CD4-positive, alpha-beta T cell (primary cell): ENCODE measurements at regions of chr21 and their contacts with region 1.

Region 1: DNA sequence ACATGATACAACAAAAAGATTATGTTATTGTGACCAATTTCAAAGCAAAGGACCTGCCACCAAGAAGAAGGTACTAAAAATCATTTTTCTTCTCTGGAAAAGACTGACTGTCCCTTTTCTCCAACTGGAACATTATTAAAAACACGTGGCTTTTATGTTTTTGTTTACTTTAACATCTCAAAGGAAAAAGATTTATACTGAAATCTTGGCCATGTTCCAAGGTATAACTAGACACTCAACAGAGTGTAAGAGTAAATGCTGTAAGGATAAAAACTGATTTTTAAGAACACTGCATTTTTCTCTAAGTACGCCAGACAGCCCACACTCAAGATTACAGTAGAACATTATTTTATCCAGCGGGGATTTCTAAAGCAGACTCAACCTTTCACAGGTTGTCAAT is 62.1 kb downstream of the BRWD1 start:
- DNase-seq: no peak
- ATAC-seq: no peak
- H3K4me3 ChIP-seq: no peak overlapping the region
- H3K4me3 Mint-ChIP-seq: no peak overlapping the region
- H3K27ac ChIP-seq: no peak overlapping the region
- H3K27ac Mint-ChIP-seq: no peak overlapping the region
- H3K4me1 ChIP-seq: no peaks in the 10 kb centered on the region
- H3K4me1 Mint-ChIP-seq: peaks cover 14% of the 10 kb centered on the region
- H3K27me3 ChIP-seq: no peaks in the 10 kb centered on the region
- H3K27me3 Mint-ChIP-seq: no peaks in the 10 kb centered on the region
- CTCF ChIP-seq: no peak

Region 2: DNA sequence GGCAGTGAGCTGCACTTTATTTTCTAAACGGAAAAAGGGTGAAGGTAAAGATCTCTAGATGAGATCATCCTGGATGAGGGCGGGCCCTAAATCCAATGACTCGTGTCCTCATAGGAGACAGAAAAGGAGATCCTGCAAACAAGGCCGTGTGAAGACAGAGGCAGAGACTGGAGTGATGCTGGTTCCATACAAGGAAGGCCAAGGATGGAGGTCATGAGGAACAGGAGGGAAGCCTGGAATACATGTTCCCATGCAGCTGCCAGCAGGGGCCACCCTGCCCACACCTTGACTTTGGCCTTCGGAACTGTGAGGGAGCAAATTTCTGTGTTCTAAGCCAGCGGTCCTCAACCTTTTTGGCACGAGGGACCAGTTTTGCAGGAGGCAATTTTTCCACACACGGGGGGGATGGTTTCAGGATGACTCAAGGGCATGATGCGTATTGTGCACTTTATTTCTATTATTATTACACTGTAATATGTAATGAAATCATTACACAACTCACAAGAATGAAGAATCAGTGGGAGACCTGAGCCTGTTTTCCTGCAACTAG is 162.4 kb before region 1 on chr21:
- CTCF ChIA-PET with region 1: no interaction called
- POLR2A ChIA-PET with region 1: no interaction called
- intact Hi-C with region 1: no loop called
- DNase-seq: no peak
- ATAC-seq: no peak
- H3K4me3 ChIP-seq: no peak overlapping the region
- H3K4me3 Mint-ChIP-seq: no peak overlapping the region
- H3K27ac ChIP-seq: no peak overlapping the region
- H3K27ac Mint-ChIP-seq: no peak overlapping the region
- H3K4me1 ChIP-seq: no peaks in the 10 kb centered on the region
- H3K4me1 Mint-ChIP-seq: no peaks in the 10 kb centered on the region
- H3K27me3 ChIP-seq: no peaks in the 10 kb centered on the region
- H3K27me3 Mint-ChIP-seq: no peaks in the 10 kb centered on the region
- CTCF ChIP-seq: no peak

Region 3: DNA sequence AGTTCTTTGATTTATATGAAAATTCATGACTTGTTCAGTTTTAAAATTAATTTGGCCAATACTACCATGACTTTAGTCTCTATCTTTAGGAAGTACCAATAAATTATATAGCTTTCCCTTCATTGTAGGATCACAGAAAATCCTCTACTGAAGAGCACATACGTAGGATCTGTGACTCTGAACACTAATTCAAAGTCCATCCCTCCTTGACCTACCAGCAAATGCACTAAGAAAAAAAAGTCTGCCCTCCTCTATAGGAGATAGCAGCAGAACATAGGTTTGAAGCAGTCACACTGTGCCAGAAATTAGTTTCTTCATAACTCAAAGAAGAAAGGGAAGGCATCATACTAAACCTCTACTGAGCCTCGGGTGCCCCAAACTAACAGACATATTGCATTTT is 45.6 kb after region 1 on chr21:
- CTCF ChIA-PET with region 1: no interaction called
- POLR2A ChIA-PET with region 1: no interaction called
- intact Hi-C with region 1: loop called in 1 of 2 experiments (anchors 10 kb)
- DNase-seq: no peak
- ATAC-seq: no peak
- H3K4me3 ChIP-seq: no peak overlapping the region
- H3K4me3 Mint-ChIP-seq: no peak overlapping the region
- H3K27ac ChIP-seq: no peak overlapping the region
- H3K27ac Mint-ChIP-seq: no peak overlapping the region
- H3K4me1 ChIP-seq: no peaks in the 10 kb centered on the region
- H3K4me1 Mint-ChIP-seq: peaks cover 43% of the 10 kb centered on the region
- H3K27me3 ChIP-seq: no peaks in the 10 kb centered on the region
- H3K27me3 Mint-ChIP-seq: no peaks in the 10 kb centered on the region
- CTCF ChIP-seq: no peak